Calu3 (cell line): ENCODE measurements at regions of chr10 and their contacts with region 1.

Region 1: DNA sequence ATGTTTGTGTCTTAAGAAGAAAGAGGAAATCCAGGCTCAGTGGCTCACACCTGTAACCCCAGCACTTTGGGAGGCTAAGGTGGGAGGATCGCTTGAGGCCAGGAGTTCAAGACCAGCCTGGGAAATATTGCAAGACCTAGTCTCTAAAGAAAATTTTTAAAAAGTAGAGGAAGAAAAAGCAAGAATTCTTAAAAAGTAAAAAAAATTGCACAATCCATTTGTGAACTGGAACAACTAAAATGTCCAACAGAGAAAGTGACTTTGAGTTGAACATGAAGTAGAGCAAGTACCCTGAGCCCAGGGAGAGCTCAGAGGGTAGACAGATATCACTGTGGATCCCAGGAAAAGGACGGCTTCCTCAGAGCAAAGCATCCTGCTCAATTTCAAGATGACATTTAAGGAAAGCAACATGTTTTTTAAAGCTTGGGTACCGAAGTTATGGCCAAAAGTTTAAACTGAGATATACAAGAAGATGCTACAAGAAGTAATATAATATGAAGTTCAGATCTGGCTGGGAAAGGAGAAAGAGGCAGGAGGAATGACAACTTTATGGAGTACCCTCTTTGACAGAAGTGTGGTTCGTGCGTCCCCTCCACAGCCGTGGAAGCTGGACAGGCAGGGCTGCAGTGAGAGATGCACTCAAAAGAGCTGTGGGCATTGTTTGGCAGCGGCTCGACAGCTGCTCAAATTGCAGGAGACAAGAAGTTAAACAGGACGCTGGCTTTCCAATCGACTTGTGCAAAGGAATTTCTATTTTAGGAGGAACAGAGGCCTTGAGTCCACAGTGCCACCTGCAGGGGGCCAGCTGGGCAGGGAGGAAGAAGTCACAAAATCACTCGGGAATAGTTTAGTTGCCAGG is 201.3 kb downstream of the JCAD start:
- DNase-seq: peak; percentile 81
- H3K4me3 Mint-ChIP-seq: peak overlapping the region; percentile 29
- H3K27ac Mint-ChIP-seq: peak overlapping the region; percentile 20
- H3K4me1 Mint-ChIP-seq: peaks cover 56% of the 10 kb centered on the region
- H3K27me3 Mint-ChIP-seq: no peaks in the 10 kb centered on the region
- CTCF ChIP-seq: peak; percentile 86

Region 2: GRCh38 chr10:29735596-29736318 is 122.3 kb before region 1 on chr10:
- CTCF ChIA-PET with region 1: interaction called, 3 read pairs
- intact Hi-C with region 1: loop called (anchors 1 kb)
- DNase-seq: peak; percentile 97
- H3K4me3 Mint-ChIP-seq: peak overlapping the region; percentile 89
- H3K27ac Mint-ChIP-seq: peak overlapping the region; percentile 82
- H3K4me1 Mint-ChIP-seq: peaks cover 36% of the 10 kb centered on the region
- H3K27me3 Mint-ChIP-seq: no peaks in the 10 kb centered on the region
- CTCF ChIP-seq: peak; percentile 87

Region 3: GRCh38 chr10:29784175-29784773 is 73.8 kb before region 1 on chr10:
- CTCF ChIA-PET with region 1: no interaction called
- intact Hi-C with region 1: loop called (anchors 5 kb)
- DNase-seq: peak; percentile 77
- H3K4me3 Mint-ChIP-seq: no peak overlapping the region
- H3K27ac Mint-ChIP-seq: peak overlapping the region; percentile 56
- H3K4me1 Mint-ChIP-seq: peaks cover 31% of the 10 kb centered on the region
- H3K27me3 Mint-ChIP-seq: no peaks in the 10 kb centered on the region
- CTCF ChIP-seq: no peak

Region 4: GRCh38 chr10:29820890-29821461 is 37.1 kb before region 1 on chr10:
- CTCF ChIA-PET with region 1: no interaction called
- intact Hi-C with region 1: no loop called
- DNase-seq: no peak
- H3K4me3 Mint-ChIP-seq: no peak overlapping the region
- H3K27ac Mint-ChIP-seq: no peak overlapping the region
- H3K4me1 Mint-ChIP-seq: peaks cover 13% of the 10 kb centered on the region
- H3K27me3 Mint-ChIP-seq: no peaks in the 10 kb centered on the region
- CTCF ChIP-seq: no peak

Region 5: DNA sequence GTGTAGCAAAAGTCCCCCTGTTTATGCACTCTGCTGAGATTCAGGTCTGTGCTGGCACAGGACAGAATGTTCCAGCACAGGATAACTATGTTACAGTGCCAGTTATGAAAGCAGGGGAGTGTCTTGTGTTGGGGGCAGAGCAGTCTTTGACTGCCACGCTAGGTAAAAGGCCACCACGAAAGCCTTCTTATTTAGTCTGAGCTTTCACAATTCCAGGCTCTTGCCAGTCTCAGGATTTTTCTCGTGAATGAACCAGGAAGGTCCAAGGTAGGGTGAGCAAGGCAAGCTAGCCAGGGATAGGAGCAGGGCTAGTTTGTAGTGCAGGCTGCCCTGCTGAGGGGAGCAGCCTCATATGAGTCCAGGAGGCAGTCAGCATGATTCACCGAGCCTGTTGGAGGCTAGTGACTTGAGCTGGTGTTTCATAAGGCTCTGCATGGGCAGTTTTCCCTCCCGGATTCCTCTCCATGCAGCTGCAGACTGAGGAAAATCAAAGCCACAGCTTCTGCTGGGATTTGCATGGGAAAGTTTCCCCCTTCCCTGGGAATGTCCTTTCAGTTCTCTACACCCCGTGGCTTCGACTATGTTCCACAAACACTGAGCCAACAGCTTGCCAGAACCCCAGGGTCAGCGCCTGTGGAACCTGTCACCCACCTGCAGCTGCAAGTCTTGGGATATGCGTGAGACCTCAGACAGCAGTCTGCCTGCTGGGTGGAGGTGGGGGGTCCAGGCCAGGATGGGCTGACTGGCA is 89.1 kb after region 1 on chr10:
- CTCF ChIA-PET with region 1: interaction called, 4 read pairs
- intact Hi-C with region 1: loop called (anchors 1 kb)
- DNase-seq: peak; percentile 41
- H3K4me3 Mint-ChIP-seq: no peak overlapping the region
- H3K27ac Mint-ChIP-seq: no peak overlapping the region
- H3K4me1 Mint-ChIP-seq: peaks cover 42% of the 10 kb centered on the region
- H3K27me3 Mint-ChIP-seq: no peaks in the 10 kb centered on the region
- CTCF ChIP-seq: no peak